Naive thymus-derived CD4-positive, alpha-beta T cell (primary cell): ENCODE measurements at regions of chr19 and their contacts with region 1.

Region 1: DNA sequence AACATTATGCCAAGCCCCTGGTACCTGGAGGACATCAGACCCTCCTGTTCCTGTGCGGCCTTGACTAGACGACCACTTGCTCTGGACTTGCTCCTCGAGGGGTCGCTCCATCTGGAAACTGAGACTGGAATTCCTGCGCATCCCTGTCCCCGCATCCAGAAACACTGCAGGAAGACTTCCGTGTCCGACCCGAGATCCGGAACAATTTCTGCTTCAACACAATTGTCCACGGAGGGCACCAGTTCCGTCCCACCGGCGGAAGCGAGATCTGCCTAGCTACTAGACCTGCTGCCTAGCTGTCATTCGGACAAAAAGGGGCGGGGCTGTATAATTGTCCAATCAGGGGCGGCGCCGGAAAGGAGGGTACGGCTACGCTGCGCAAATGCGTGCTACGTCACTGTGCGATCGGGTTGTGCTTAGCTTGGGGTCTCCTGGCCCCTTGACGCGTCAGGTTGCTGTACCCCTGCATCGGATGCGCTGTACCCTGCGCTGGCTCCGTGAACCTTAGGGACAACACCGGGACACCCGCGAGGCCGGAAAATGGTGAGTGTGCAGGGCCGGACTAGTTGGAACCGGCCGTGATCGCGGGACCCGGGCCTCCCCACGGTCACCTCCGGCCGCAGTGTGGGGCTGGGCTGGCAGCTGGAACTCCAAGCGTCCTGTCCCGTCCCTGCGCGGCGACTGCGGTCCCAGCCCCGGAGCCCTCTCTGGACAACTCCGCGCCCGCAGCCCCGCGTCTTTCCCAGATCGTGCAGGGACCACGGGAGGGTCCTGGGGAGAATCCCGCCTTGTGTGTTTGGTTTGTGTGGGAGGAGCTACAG is at the starts of genes ZNF490 and ZNF791:
- DNase-seq: peak; percentile 81 to 97 (median 94)
- ATAC-seq: peak; percentile 94
- H3K4me3 ChIP-seq: peak within 1 kb of the TSS; percentile 71
- H3K4me3 Mint-ChIP-seq: peak within 1 kb of the TSS; percentile 94 to 100 (median 100)
- H3K27ac ChIP-seq: peak within 1 kb of the TSS; percentile 95
- H3K27ac Mint-ChIP-seq: peak within 1 kb of the TSS; percentile 97 to 100 (median 99)
- H3K4me1 ChIP-seq: peaks cover 24 to 41% of the 10 kb centered on the region in 2 donors
- H3K4me1 Mint-ChIP-seq: peaks cover 16 to 48% (median 36%) of the 10 kb centered on the region in 7 donors
- H3K27me3 ChIP-seq: no peaks in the 10 kb centered on the region
- H3K27me3 Mint-ChIP-seq: no peaks in the 10 kb centered on the region
- total RNA-seq, gene ZNF490: 10.3 to 14.9 (median 11.6) TPM
- total RNA-seq, gene ZNF791: 29.1 to 53.3 (median 38.7) TPM

Region 2: DNA sequence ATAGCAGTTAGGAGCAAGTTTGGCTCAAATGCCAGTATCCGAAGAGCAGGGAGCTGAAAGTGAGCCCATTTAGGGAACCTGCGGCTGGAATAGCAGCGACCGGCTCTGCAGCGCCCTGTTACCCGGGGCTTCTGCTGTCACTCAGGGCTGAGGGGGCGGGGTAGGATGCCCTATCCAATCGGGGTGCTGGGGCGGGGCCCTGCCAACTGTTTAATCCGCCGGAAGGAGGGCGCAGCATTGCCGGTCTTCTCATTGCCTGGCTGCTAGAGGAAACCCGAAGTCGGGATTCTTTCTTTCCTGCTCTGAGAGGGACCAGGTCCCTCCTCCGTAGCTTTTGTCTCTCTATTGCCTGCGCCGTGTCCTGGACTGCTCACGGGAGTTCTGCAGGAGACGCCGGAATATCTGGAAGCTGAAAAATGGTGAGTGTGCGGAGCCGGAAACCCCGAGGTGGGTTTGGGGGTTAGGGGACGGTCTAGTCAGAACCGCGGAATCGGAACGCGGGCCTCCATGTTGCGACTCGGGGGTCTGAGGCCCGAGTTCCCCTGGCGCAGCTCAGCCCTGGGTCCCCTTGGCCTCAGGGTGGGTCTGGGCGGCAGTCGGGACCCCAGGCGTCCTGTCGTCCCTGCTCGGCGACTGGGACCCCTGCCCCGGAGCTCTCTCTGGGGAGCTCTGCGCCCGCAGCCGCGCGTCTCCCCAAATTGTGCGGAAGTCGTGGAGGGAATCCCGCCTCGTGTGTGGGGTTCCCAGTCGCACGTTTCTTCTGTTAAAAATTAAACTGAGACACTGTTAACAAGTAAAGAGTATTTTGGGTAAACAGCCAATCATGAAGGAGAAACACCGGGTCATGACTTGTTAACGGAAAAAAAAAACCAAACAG is 623.1 kb before region 1 on chr19:
- CTCF ChIA-PET with region 1: no interaction called
- POLR2A ChIA-PET with region 1: no interaction called
- intact Hi-C with region 1: loop called in 1 of 2 experiments (anchors 1 kb)
- DNase-seq: peak; percentile 73 to 90 (median 87)
- ATAC-seq: peak; percentile 95
- H3K4me3 ChIP-seq: peak overlapping the region; percentile 98
- H3K4me3 Mint-ChIP-seq: peak overlapping the region; percentile 84 to 99 (median 96)
- H3K27ac ChIP-seq: peak overlapping the region; percentile 88
- H3K27ac Mint-ChIP-seq: peak overlapping the region; percentile 70 to 97 (median 96)
- H3K4me1 ChIP-seq: peaks cover 0 to 8% of the 10 kb centered on the region in 2 donors
- H3K4me1 Mint-ChIP-seq: peaks cover 15 to 39% (median 28%) of the 10 kb centered on the region in 7 donors
- H3K27me3 ChIP-seq: no peaks in the 10 kb centered on the region
- H3K27me3 Mint-ChIP-seq: peaks cover 0 to 2% (median 0%) of the 10 kb centered on the region in 5 donors

Region 3: GRCh38 chr19:12564016-12564664 is 46.6 kb before region 1 on chr19:
- CTCF ChIA-PET with region 1: interaction called, 6 read pairs
- POLR2A ChIA-PET with region 1: no interaction called
- intact Hi-C with region 1: loop called (anchors 1 to 2 kb)
- DNase-seq: peak; percentile 79 to 96 (median 88)
- ATAC-seq: peak; percentile 100
- H3K4me3 ChIP-seq: no peak overlapping the region
- H3K4me3 Mint-ChIP-seq: peak overlapping the region in 1 of 10 donors; percentile 33
- H3K27ac ChIP-seq: no peak overlapping the region
- H3K27ac Mint-ChIP-seq: peak overlapping the region in 2 of 9 donors; percentile 3 to 51
- H3K4me1 ChIP-seq: no peaks in the 10 kb centered on the region
- H3K4me1 Mint-ChIP-seq: peaks cover 0 to 6% (median 5%) of the 10 kb centered on the region in 7 donors
- H3K27me3 ChIP-seq: no peaks in the 10 kb centered on the region
- H3K27me3 Mint-ChIP-seq: no peaks in the 10 kb centered on the region

Region 4: GRCh38 chr19:12596927-12597548 is 13.7 kb before region 1 on chr19:
- CTCF ChIA-PET with region 1: no interaction called
- POLR2A ChIA-PET with region 1: no interaction called
- intact Hi-C with region 1: no loop called
- DNase-seq: no peak
- ATAC-seq: no peak
- H3K4me3 ChIP-seq: no peak overlapping the region
- H3K4me3 Mint-ChIP-seq: no peak overlapping the region
- H3K27ac ChIP-seq: no peak overlapping the region
- H3K27ac Mint-ChIP-seq: no peak overlapping the region
- H3K4me1 ChIP-seq: no peaks in the 10 kb centered on the region
- H3K4me1 Mint-ChIP-seq: peaks cover 0 to 4% (median 0%) of the 10 kb centered on the region in 7 donors
- H3K27me3 ChIP-seq: no peaks in the 10 kb centered on the region
- H3K27me3 Mint-ChIP-seq: no peaks in the 10 kb centered on the region

Region 5: GRCh38 chr19:12666265-12667048 is 55.7 kb after region 1 on chr19 and contains the starts of genes MAN2B1 and WDR83:
- CTCF ChIA-PET with region 1: interaction called, 4 read pairs
- POLR2A ChIA-PET with region 1: interaction called, 10 read pairs
- intact Hi-C with region 1: loop called (anchors 1 to 2 kb)
- DNase-seq: peak; percentile 56 to 86 (median 72)
- ATAC-seq: peak; percentile 82
- H3K4me3 ChIP-seq: peak within 1 kb of the TSS; percentile 92
- H3K4me3 Mint-ChIP-seq: peak within 1 kb of the TSS; percentile 90 to 100 (median 98)
- H3K27ac ChIP-seq: peak within 1 kb of the TSS; percentile 99
- H3K27ac Mint-ChIP-seq: peak within 1 kb of the TSS; percentile 77 to 100 (median 91)
- H3K4me1 ChIP-seq: peaks cover 38% of the 10 kb centered on the region in 2 donors
- H3K4me1 Mint-ChIP-seq: peaks cover 22 to 69% (median 45%) of the 10 kb centered on the region in 7 donors
- H3K27me3 ChIP-seq: no peaks in the 10 kb centered on the region
- H3K27me3 Mint-ChIP-seq: no peaks in the 10 kb centered on the region
- total RNA-seq, gene MAN2B1: 105 to 215 (median 138) TPM
- total RNA-seq, gene WDR83: 7.8 to 18.6 (median 14.7) TPM

Region 6: DNA sequence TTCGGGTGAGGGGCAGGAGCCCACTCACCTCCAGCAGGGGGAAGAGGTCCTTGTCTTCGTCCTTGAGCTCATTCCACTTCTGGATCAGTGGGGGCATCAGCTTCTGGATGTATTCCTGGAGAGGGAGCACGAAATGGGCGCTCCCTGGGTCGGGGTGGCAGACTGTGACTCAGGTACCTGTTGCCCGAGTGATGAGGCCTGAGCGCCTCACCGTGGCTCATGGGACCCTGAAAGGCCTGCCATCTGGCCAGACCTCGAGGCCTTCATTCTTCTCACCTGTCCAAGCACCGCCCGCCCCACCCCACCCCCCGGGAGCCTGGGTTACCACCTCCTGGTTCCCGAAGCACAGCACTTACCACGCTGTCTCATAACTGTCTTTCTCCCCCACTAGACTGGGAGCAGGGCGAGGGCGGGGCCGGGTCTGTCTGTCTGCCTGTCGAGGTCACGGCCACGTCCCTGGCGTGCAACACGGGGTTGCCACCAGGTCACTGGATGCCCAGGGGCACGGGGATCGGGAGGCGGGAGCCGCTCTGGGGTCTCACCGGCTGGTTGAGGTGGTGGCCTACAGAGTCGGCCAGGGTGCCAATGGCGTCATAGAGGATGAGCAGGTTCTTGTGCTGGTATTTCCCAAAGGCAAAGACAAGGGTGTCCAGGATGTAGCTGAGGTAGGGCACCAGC is 95.0 kb after region 1 on chr19:
- CTCF ChIA-PET with region 1: no interaction called
- POLR2A ChIA-PET with region 1: no interaction called
- intact Hi-C with region 1: no loop called
- DNase-seq: no peak
- ATAC-seq: no peak
- H3K4me3 ChIP-seq: no peak overlapping the region
- H3K4me3 Mint-ChIP-seq: no peak overlapping the region
- H3K27ac ChIP-seq: no peak overlapping the region
- H3K27ac Mint-ChIP-seq: no peak overlapping the region
- H3K4me1 ChIP-seq: no peaks in the 10 kb centered on the region
- H3K4me1 Mint-ChIP-seq: peaks cover 0 to 4% (median 0%) of the 10 kb centered on the region in 7 donors
- H3K27me3 ChIP-seq: no peaks in the 10 kb centered on the region
- H3K27me3 Mint-ChIP-seq: no peaks in the 10 kb centered on the region

Region 7: DNA sequence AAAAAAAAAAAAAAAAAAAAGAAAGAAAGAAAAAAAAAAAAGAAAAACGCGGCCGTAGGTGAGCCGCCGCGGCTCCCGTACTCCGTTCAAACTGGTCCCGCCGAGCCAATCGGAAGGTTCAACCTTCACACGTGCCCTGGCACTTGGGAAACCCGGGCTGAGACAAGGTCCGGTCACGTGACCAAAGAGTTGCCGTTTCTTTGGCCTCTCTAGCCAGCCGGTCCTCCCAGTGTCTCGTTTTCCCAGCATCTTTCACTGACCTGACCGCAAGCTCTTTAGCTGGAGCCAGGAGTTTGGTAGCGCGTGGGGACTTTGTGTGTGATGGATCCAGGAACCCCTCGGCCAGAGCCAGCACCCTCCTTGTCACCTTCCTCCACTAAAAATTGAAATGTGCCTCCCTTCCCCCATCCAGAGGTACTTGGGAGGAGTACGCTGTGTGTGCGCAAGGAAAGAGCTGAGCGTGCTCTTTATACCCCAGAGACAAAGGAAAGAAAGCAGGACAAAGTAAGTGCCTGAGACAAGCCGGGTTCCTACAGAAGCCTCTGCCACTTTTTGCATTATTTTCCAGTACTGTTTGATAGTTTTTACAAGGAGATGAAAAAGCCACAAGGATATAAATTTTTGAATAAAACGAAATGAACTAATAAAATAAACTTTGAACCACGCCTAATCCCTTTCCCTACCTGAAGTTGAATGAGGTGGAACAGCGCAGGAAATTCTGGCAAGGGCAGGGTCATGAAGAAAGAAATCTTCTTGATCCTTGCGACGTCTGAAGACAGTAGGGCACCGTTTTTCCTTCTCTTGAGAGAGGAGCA is 112.0 kb after region 1 on chr19:
- CTCF ChIA-PET with region 1: no interaction called
- POLR2A ChIA-PET with region 1: interaction called, 5 read pairs
- intact Hi-C with region 1: loop called in 1 of 2 experiments (anchors 5 kb)
- DNase-seq: peak; percentile 66 to 97 (median 91)
- ATAC-seq: peak; percentile 96
- H3K4me3 ChIP-seq: peak overlapping the region; percentile 91
- H3K4me3 Mint-ChIP-seq: peak overlapping the region; percentile 86 to 96 (median 93)
- H3K27ac ChIP-seq: peak overlapping the region; percentile 85
- H3K27ac Mint-ChIP-seq: peak overlapping the region; percentile 89 to 97 (median 95)
- H3K4me1 ChIP-seq: peaks cover 11 to 16% of the 10 kb centered on the region in 2 donors
- H3K4me1 Mint-ChIP-seq: peaks cover 20 to 43% (median 38%) of the 10 kb centered on the region in 7 donors
- H3K27me3 ChIP-seq: no peaks in the 10 kb centered on the region
- H3K27me3 Mint-ChIP-seq: peaks cover 0 to 2% (median 0%) of the 10 kb centered on the region in 5 donors